T-cell (primary cell): ENCODE measurements at regions of chr1 and their contacts with region 1.

Region 1: DNA sequence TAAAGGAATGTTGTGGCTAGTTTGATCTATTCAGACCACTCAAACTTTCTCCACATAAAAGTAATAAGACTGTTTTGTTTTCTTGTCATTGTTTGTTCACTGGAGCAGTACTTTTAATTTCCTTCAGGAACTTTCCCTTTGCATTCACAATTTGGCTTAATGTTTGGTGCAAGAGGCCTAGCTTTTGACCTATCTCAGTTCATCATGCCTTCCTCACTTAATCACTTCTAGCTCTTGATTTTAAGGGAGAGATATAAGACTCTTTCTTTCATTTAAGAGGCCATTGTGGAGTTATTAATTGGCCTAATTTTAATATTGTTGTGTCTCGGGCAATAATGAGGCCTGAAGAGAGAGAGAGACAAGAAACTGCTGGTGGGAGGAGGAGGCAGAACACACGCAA is 371.7 kb upstream of the DEPDC1 start:
- DNase-seq: no peak
- ATAC-seq: no peak
- H3K4me3 ChIP-seq: no peak overlapping the region
- H3K4me3 Mint-ChIP-seq: no peak overlapping the region
- H3K27ac ChIP-seq: no peak overlapping the region
- H3K27ac Mint-ChIP-seq: no peak overlapping the region
- H3K4me1 ChIP-seq: no peaks in the 10 kb centered on the region
- H3K4me1 Mint-ChIP-seq: no peaks in the 10 kb centered on the region
- H3K27me3 ChIP-seq: no peaks in the 10 kb centered on the region
- H3K27me3 Mint-ChIP-seq: no peaks in the 10 kb centered on the region

Region 2: GRCh38 chr1:69055194-69055593 is 186.6 kb after region 1 on chr1:
- CTCF ChIA-PET with region 1: no interaction called
- POLR2A ChIA-PET with region 1: interaction called in 1 of 2 experiments, 11 read pairs
- DNase-seq: no peak
- ATAC-seq: no peak
- H3K4me3 ChIP-seq: no peak overlapping the region
- H3K4me3 Mint-ChIP-seq: no peak overlapping the region
- H3K27ac ChIP-seq: no peak overlapping the region
- H3K27ac Mint-ChIP-seq: no peak overlapping the region
- H3K4me1 ChIP-seq: no peaks in the 10 kb centered on the region
- H3K4me1 Mint-ChIP-seq: no peaks in the 10 kb centered on the region
- H3K27me3 ChIP-seq: no peaks in the 10 kb centered on the region
- H3K27me3 Mint-ChIP-seq: no peaks in the 10 kb centered on the region